HCT116 (cell line): ENCODE measurements at regions of chr6 and their contacts with region 1.

Region 1: DNA sequence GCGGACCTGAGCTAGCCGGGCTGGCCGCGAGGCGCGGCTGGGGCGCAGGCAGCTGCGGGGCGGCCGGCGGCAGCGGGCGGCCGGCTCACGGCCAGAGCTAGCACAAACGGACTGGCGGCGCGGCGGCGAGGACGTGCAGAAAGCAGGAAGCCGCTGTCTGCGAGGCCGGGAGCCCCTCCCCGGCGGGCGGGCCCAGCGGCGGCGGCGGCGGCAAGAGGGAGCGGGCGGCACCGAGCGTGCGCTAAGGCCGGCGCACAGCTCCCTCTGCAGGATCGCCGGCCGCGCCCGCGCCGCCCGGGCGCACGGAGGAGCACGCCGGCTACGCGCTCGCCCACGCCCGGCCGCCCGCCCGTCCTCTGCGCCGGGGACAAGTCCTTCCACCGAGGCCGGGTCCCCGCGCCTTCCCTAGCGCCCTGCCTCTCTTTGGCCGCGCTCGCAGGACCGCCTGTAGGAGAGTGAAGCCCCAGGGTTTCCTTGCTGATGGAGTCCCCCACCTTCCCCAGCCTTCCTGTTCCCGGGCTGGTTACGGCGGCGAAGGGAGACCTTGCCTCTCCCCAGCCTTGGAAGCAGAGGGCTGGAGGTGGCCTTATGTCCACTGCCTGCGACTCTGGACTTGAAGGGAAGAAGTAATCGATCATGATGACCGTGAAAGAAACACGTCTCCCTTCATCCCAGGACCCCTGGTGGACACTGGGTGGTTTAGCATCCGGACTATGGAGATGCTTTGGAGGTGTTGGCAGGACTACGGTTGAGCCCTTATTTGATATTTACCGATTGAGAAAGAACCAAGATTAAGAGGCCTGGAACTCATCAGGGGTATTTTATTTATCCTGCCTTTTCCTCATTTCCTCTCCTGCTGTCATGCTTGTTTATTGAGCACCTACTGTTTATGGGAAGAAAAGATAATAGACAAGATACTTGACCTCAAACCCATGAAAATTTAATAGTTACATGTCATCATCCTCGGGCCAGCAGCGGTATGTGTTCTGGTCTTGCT is at the start of gene PREP:
- DNase-seq: peak; percentile 72
- ATAC-seq: peak; percentile 92
- H3K4me3 ChIP-seq: peak within 1 kb of the TSS; percentile 82 to 94
- H3K27ac ChIP-seq: peak within 1 kb of the TSS; percentile 84
- H3K4me1 ChIP-seq: peaks cover 6 to 20% of the 10 kb centered on the region in 2 experiments; a peak in 3 of 4 replicates
- H3K27me3 ChIP-seq: no peaks in the 10 kb centered on the region
- CTCF ChIP-seq: peak; percentile 67 to 88 (median 81); a peak in 5 of 6 replicates
- POLR2A ChIP-seq: no peak
- RAD21 ChIP-seq: peak; percentile 58
- total RNA-seq, gene PREP: 53.5 TPM

Region 2: DNA sequence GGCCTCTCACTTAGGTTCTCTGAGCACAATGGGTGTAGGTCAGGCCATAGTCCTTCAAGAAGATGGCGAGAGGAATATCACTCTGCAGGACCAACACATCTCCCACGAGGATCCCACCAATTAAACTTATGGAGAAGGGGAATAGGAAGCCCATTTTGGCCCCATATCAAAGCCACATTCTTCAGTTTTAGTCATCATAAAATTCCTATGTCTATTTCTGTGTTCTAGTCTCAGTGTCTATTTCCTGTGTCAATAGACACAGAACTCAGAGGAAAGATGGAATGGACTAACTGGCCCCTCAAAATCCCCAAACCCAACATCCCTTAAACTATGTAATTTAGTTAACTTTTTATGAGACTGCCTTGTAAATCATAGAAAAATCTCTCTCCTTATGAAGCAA is 760.4 kb before region 1 on chr6:
- CTCF ChIA-PET with region 1: no interaction called
- POLR2A ChIA-PET with region 1: no interaction called
- RAD21 ChIA-PET with region 1: no interaction called
- intact Hi-C with region 1: no loop called
- DNase-seq: no peak
- ATAC-seq: no peak
- H3K4me3 ChIP-seq: no peak overlapping the region
- H3K27ac ChIP-seq: no peak overlapping the region
- H3K4me1 ChIP-seq: no peaks in the 10 kb centered on the region
- H3K27me3 ChIP-seq: no peaks in the 10 kb centered on the region
- CTCF ChIP-seq: no peak
- POLR2A ChIP-seq: no peak
- RAD21 ChIP-seq: no peak

Region 3: DNA sequence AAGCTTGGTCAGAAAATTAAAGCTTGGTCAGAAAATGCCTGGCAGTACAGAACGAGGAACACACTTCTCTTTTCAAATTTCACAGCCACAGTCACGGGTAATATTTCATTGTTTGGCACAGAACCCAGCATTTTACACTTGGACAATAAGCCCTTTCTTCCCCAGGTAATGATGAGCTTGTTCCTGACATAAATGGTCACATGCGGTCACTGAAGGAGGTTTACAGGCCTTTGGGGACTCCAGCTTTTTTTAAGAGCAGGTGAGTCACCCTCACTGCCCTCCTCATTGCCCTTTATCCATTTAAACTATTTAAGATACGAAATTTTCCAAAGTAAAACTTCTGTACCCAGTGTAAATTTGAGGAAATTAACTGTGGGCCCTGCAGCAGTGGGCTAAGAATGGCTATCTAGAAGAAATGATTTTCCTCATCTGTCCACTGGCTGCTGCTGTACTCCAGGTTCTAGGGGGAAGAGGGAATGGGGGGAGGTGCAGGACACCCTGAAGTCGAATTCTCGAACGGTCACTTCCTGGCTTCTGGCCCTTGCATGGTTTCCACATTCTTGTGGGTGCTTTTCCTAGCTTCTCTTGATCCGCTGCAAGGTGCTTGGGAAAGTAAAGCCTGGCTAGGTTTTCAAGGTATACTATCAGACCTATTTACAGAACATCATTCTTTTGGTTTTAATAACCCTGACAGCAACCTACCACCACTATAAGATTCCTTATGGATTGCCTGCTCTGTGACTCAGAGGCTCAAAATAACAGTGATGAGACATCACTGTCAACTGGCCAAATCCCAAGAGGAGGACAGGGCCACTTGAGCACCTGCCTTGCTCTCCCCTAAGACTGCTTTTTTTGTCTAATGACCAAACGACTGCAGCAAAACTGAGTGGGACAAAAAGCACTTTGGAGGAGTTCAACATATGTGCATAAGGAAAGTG is 76.1 kb before region 1 on chr6:
- CTCF ChIA-PET with region 1: no interaction called
- POLR2A ChIA-PET with region 1: no interaction called
- RAD21 ChIA-PET with region 1: no interaction called
- intact Hi-C with region 1: loop called (anchors 2 kb)
- DNase-seq: peak; percentile 94
- ATAC-seq: peak; percentile 81
- H3K4me3 ChIP-seq: peak overlapping the region; percentile 19 to 47
- H3K27ac ChIP-seq: peak overlapping the region; percentile 84
- H3K4me1 ChIP-seq: peaks cover 60 to 77% of the 10 kb centered on the region in 2 experiments
- H3K27me3 ChIP-seq: no peaks in the 10 kb centered on the region
- CTCF ChIP-seq: no peak
- POLR2A ChIP-seq: no peak
- RAD21 ChIP-seq: 0 out of 2 replicates have a peak, but pooled peaks have one; percentile 9